ENCODE measurements at regions of chr9 and their contacts with region 1.

Region 1: DNA sequence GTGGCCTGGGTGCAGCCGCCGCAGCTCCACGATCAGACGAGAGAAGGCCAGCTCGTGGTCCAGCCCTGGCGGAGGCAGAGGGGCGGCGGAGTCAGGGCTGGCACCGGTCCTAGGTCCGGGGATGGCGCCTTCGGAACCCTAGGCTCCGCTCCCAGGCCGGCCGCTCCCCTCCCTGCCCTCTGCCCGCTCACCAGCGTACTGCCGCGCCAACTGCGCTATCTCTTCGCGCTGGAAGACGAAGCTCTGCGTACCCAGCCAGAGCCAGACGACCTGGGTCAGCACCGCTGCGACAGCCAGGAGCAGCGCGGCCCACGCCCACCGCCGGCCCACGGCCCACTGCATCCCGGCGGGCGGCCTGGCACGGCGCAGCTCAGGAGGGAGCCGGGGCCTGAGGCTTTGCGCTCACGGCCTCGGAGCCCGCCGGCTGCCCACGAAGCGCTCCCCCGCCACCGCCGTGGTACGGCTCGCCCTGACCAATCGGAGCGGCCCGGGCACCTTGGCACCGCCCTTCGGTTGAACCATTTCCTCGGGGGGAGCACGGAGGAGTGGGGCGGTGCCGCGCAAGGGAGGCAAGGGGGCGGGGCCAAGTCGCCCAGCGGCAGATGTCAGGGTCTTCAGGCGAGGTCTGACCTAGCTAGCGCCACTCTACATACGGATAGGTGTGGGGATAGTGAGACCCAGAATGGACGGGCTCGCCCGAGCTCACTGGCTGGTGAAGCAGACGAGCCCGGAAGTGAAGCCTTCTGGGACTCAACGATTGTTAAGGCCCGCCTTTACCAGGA is at the start of gene SIGMAR1:
- DNase-seq: peak; percentile 95
- ATAC-seq: peak; percentile 95
- H3K4me3 Mint-ChIP-seq: peak within 1 kb of the TSS; percentile 85
- H3K27ac Mint-ChIP-seq: peak within 1 kb of the TSS; percentile 87
- H3K4me1 Mint-ChIP-seq: peaks cover 36% of the 10 kb centered on the region
- H3K27me3 Mint-ChIP-seq: no peaks in the 10 kb centered on the region
- total RNA-seq, gene SIGMAR1: 66.1 to 82.1 TPM

Region 2: GRCh38 chr9:34591248-34591916 is 46.2 kb before region 1 on chr9:
- CTCF ChIA-PET with region 1: interaction called, 11 read pairs
- DNase-seq: peak; percentile 80
- ATAC-seq: peak; percentile 91
- H3K4me3 Mint-ChIP-seq: peak overlapping the region; percentile 9
- H3K27ac Mint-ChIP-seq: no peak overlapping the region
- H3K4me1 Mint-ChIP-seq: peaks cover 22% of the 10 kb centered on the region
- H3K27me3 Mint-ChIP-seq: peaks cover 83% of the 10 kb centered on the region

Region 3: DNA sequence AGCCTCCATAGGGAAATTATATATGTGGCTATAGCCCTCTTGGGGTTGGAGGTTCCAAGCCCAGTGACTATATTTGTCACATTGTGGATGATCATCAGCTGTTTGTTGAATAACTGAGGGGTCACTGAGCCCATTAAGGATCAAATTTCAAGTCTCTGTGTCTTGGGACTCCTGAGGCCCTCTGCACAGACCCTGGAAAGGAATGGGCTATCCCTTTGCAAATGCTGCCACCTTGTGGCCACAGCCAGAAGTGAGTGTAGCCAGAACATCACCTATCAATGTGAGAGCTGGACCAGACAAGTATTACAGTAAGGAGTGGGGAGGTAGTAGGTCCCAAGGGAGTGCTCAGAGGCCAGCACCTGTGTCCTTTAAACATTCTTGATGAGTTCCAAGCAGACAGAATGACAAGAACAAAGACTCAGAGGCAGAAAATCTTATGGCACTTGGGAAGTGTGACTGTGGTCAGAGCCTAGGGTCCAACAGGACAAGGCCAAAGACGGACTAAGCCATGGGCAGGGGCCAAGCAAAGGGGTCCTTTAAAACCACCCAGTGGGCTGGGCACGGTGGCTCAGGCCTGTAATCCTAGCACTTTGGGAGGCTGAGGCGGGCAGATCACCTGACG is 33.8 kb before region 1 on chr9:
- CTCF ChIA-PET with region 1: interaction called, 55 read pairs
- DNase-seq: peak; percentile 86
- ATAC-seq: peak; percentile 92
- H3K4me3 Mint-ChIP-seq: no peak overlapping the region
- H3K27ac Mint-ChIP-seq: no peak overlapping the region
- H3K4me1 Mint-ChIP-seq: no peaks in the 10 kb centered on the region
- H3K27me3 Mint-ChIP-seq: peaks cover 12% of the 10 kb centered on the region

Region 4: DNA sequence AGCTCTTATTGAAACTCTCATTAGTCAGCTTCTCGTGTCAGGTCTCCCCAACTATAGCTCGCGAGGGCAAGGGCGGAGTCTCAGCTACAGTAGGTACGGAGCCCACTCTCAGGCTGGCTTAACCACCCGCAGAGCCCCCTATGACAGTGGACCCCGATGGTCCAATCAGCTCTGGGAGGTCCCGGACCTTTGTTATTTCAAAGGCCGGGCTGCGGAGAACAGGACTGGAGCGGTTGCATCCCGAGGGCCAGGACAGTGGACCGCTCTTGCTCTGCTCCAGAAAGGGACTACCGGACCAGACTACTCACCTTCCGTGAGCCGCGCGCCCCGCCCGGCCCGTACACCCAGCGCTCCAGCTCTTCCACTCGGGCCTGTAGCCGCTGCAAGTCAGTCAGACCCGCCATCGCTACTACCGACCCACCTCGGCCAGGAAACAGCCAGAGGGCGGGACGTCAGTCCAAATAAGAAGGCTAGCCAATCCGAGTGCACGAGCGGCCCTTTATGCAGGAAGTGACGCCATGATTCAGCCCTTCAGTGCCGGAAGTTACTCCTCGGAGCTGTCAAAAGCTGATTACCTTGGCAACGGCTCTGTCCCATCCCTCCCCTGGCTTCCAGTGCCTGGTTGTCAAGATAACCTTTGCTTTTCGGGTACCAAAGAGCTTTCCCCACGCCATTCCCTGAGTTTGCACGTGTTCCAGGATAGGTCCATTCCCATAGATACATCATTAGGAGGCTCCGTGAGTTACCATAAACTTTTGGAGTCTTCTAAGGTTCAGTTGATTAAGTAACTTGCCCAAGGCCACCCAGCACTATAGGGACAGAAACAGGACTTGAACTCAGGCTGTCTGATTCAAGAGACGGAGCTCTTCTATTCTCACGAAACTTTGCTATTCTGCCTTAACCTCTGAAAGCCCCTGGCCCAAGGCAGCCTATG is 17.2 kb before region 1 on chr9 and contains the start of gene DCTN3:
- CTCF ChIA-PET with region 1: interaction called, 293 read pairs
- DNase-seq: peak; percentile 97
- ATAC-seq: peak; percentile 99
- H3K4me3 Mint-ChIP-seq: peak within 1 kb of the TSS; percentile 89
- H3K27ac Mint-ChIP-seq: peak within 1 kb of the TSS; percentile 81
- H3K4me1 Mint-ChIP-seq: peaks cover 25% of the 10 kb centered on the region
- H3K27me3 Mint-ChIP-seq: peaks cover 28% of the 10 kb centered on the region
- total RNA-seq, gene DCTN3: 106 to 120 TPM

Region 5: GRCh38 chr9:34665381-34666250 is 28.1 kb after region 1 on chr9:
- CTCF ChIA-PET with region 1: interaction called, 52 read pairs
- DNase-seq: peak; percentile 94
- ATAC-seq: peak; percentile 83
- H3K4me3 Mint-ChIP-seq: peak overlapping the region; percentile 80
- H3K27ac Mint-ChIP-seq: peak overlapping the region; percentile 90
- H3K4me1 Mint-ChIP-seq: peaks cover 29% of the 10 kb centered on the region
- H3K27me3 Mint-ChIP-seq: no peaks in the 10 kb centered on the region

Measured in activated CD8-positive, alpha-beta memory T cell treated with anti-CD3 and anti-CD28 coated beads, Interleukin-2, amount 10 ng/mL, durations not matched to agents 7 days and 5 days (primary cell).